ENCODE measurements at regions of chr7 and their contacts with region 1.

Region 1: GRCh38 chr7:102464577-102465280 is at the starts of genes ALKBH4 and LRWD1:
- DNase-seq: peak; percentile 91 to 94 (median 93)
- H3K4me3 ChIP-seq: peak within 1 kb of the TSS; percentile 63 to 100 (median 98)
- H3K27ac ChIP-seq: peak within 1 kb of the TSS; percentile 66 to 85
- H3K4me1 ChIP-seq: peaks cover 5 to 20% (median 18%) of the 10 kb centered on the region in 4 experiments
- H3K27me3 ChIP-seq: no peaks in the 10 kb centered on the region

Region 2: DNA sequence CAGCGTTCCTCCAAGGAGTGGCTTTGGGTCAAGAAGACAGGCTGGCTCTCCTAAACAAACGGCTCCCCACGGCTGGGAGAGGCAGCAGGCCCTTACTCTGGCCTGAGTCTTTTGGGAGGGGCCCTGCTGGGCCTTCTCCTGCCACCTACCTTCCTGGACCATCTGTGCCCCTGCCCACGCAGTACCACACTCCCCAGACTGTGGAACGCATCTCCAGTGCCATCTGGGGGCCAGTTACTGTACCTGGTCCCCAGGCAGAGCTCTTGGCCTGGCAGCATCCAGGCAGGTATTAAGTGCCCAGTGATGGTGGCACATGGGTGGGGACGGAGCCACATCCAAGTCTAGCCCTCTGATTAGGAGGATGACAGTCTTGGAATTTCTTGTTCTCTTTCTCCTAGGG is 14.5 kb before region 1 on chr7:
- CTCF ChIA-PET with region 1: interaction called, 1,488 read pairs
- POLR2A ChIA-PET with region 1: no interaction called
- DNase-seq: peak; percentile 49 to 69 (median 66)
- H3K4me3 ChIP-seq: no peak overlapping the region
- H3K27ac ChIP-seq: no peak overlapping the region
- H3K4me1 ChIP-seq: no peaks in the 10 kb centered on the region
- H3K27me3 ChIP-seq: no peaks in the 10 kb centered on the region